ENCODE measurements at regions of chr7 and their contacts with region 1.

Region 1: GRCh38 chr7:70693686-70694360 is 438.1 kb upstream of the GALNT17 start:
- DNase-seq: peak; percentile 91 to 95
- ATAC-seq: peak; percentile 88 to 91 (median 90)
- H3K4me3 ChIP-seq: peak overlapping the region; percentile 81
- H3K27ac ChIP-seq: peak overlapping the region; percentile 81
- H3K4me1 ChIP-seq: peaks cover 15% of the 10 kb centered on the region
- H3K27me3 ChIP-seq: no peaks in the 10 kb centered on the region
- CTCF ChIP-seq: peak; percentile 20

Region 2: DNA sequence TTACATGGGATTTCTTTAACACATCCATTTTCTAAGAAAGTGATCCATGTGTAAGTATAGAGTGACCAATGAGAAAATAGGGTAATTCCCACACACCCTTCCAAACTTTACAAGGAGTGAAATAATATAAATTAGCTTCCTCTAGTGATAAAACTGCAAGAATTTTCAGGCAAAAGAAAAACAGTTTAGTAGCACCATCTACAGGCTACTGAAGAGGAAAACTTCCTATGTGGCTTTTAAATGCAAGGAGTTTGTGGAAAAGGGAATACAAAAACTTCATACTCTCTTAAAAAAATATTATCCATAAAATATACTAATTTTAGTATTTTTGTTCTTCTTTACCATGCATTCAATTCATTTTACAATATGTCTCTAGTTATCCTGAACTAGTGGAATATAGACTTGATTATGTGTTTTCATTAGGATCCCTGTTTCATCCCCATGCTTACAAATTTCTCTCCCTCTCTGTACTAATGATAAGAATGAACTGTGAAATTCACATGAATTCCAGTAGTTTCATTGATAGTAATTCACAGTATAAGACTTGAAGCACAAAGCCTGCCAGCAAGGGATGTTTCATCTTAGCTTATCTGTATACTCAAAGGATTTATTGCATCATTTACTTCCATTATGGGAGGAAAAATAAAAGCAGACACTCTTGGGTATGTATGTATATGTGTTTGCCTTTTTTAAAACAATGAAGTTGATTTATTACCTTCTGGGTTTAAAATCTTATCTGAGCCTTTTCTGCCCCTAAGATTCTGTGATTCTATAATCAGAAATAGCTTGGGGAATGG is 652.7 kb before region 1 on chr7:
- intact Hi-C with region 1: loop called in 1 of 2 experiments (anchors 5 kb)
- DNase-seq: no peak
- ATAC-seq: peak in 1 of 4 donors; percentile 49
- H3K4me3 ChIP-seq: no peak overlapping the region
- H3K27ac ChIP-seq: no peak overlapping the region
- H3K4me1 ChIP-seq: peaks cover 12% of the 10 kb centered on the region
- H3K27me3 ChIP-seq: no peaks in the 10 kb centered on the region
- CTCF ChIP-seq: peak; percentile 55

Region 3: DNA sequence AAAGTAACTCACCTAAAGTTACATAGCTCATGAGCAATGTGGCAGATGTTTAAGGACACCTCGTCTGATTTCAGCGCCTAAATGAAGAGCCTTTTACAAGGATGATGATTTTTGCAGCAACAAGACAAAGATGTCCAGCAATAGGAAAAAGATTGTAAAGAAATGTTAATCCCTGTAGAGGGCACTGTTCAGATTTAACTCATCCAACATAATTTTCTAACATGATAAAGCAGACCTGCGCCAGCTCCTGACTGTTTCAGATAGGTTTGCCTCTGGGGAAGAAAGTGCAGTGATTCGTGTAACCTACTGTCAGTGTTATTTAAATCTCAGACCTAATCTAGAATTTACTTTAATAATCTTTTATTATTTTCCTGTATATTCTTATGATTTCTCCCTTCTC is 500.3 kb before region 1 on chr7:
- intact Hi-C with region 1: loop called in 1 of 2 experiments (anchors 5 kb)
- DNase-seq: no peak
- ATAC-seq: no peak
- H3K4me3 ChIP-seq: no peak overlapping the region
- H3K27ac ChIP-seq: no peak overlapping the region
- H3K4me1 ChIP-seq: no peaks in the 10 kb centered on the region
- H3K27me3 ChIP-seq: no peaks in the 10 kb centered on the region
- CTCF ChIP-seq: peak; percentile 18

Region 4: DNA sequence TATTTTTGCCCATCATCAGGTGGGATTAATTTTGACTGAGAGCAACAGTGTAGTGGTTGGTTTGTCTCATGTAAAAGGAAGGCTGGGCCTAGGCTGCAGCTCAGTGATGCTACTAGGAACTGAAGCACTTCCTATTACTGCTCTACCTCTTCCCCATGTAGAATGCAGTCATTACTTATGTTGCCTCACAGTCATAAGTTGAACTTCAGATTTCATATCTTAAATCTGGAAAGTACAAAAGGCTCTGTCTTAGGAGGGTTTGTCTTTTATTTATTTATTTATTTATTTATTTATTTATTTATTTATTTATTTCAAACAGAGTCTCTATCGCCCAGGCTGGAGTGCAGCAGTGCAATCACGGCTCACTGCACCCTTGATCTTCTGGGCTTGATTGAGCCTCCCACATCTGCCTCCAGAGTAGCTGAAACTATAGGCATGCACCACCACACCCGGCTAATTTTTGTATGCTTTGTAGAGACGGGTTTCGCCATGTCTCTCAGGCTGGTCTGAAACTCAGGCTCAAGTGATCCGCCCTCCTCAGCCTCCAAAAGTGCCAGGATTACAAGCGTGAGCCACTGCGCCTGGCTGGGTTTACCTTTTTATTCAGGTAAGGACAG is 283.6 kb before region 1 on chr7:
- intact Hi-C with region 1: loop called (anchors 5 to 10 kb)
- DNase-seq: no peak
- ATAC-seq: no peak
- H3K4me3 ChIP-seq: no peak overlapping the region
- H3K27ac ChIP-seq: no peak overlapping the region
- H3K4me1 ChIP-seq: no peaks in the 10 kb centered on the region
- H3K27me3 ChIP-seq: no peaks in the 10 kb centered on the region
- CTCF ChIP-seq: no peak

Region 5: DNA sequence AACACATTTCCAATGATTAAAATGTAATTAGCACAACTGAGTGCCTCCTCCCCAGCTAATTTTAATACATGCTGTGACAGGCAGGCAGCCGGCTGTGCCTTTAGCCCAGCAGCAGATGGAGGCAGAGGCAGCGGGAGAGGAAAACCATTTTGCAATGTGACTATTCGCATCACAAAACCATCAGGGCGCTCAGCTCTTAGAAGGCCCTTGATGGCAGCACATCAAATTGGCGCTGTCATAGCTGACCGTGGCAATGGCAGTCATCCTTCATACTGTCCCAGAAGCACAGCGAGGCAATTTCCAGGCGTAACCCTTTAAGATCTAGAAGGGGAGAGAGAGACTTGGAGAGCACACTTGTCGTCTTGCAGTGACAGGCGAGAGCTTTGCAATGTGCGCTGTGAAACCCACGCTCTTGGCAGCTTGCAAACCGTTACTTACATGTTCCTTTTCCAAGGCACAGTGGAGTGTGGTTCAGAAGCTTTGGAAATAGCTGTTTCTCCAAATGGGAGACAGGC is 276.6 kb before region 1 on chr7:
- intact Hi-C with region 1: loop called (anchors 5 to 10 kb)
- DNase-seq: peak in 1 of 2 donors; percentile 19
- ATAC-seq: peak; percentile 52 to 90 (median 72)
- H3K4me3 ChIP-seq: no peak overlapping the region
- H3K27ac ChIP-seq: no peak overlapping the region
- H3K4me1 ChIP-seq: no peaks in the 10 kb centered on the region
- H3K27me3 ChIP-seq: no peaks in the 10 kb centered on the region
- CTCF ChIP-seq: peak; percentile 36

Region 6: GRCh38 chr7:70571403-70571934 is 122.4 kb before region 1 on chr7:
- intact Hi-C with region 1: loop called (anchors 5 kb)
- DNase-seq: no peak
- ATAC-seq: no peak
- H3K4me3 ChIP-seq: no peak overlapping the region
- H3K27ac ChIP-seq: no peak overlapping the region
- H3K4me1 ChIP-seq: peaks cover 20% of the 10 kb centered on the region
- H3K27me3 ChIP-seq: no peaks in the 10 kb centered on the region
- CTCF ChIP-seq: no peak

Region 7: GRCh38 chr7:70668606-70669358 is 25.0 kb before region 1 on chr7:
- intact Hi-C with region 1: loop called in 1 of 2 experiments (anchors 2 kb)
- DNase-seq: peak; percentile 40 to 87
- ATAC-seq: peak; percentile 94 to 98 (median 98)
- H3K4me3 ChIP-seq: no peak overlapping the region
- H3K27ac ChIP-seq: peak overlapping the region; percentile 61
- H3K4me1 ChIP-seq: peaks cover 17% of the 10 kb centered on the region
- H3K27me3 ChIP-seq: no peaks in the 10 kb centered on the region
- CTCF ChIP-seq: no peak

Region 8: DNA sequence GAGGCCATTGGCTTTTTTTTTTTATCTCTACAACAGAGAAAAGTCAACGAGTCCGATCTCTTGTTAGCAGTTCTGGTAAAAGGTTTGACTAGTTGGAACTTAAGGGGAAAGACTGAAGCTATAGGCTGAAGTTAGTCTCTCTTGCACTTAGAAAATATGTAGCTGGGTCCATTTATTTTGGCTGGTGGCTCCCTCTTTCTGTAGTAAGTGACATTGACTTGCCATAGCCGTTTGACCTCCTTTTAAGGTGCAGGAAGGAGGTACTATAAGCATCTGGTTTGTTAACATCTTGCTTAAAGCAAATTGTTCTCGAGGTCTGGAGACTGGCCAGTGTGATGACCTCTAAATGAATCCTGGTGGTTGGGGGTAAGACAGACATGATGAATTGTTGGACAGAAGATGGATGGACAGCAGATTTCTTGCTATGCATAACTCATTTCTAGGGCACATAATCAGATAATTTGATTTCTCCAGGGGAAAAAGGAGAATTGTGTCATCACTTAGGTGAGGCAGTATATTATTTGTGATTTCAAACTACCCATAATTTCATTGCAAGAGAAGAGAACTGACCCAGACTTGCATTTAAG is 81.8 kb after region 1 on chr7:
- intact Hi-C with region 1: no loop called
- DNase-seq: no peak
- ATAC-seq: peak in 2 of 4 donors; percentile 38 to 61
- H3K4me3 ChIP-seq: no peak overlapping the region
- H3K27ac ChIP-seq: no peak overlapping the region
- H3K4me1 ChIP-seq: no peaks in the 10 kb centered on the region
- H3K27me3 ChIP-seq: no peaks in the 10 kb centered on the region
- CTCF ChIP-seq: no peak

Measured in psoas muscle (tissue), 8 donors.